ENCODE measurements at regions of chr12 and their contacts with region 1.

Region 1: DNA sequence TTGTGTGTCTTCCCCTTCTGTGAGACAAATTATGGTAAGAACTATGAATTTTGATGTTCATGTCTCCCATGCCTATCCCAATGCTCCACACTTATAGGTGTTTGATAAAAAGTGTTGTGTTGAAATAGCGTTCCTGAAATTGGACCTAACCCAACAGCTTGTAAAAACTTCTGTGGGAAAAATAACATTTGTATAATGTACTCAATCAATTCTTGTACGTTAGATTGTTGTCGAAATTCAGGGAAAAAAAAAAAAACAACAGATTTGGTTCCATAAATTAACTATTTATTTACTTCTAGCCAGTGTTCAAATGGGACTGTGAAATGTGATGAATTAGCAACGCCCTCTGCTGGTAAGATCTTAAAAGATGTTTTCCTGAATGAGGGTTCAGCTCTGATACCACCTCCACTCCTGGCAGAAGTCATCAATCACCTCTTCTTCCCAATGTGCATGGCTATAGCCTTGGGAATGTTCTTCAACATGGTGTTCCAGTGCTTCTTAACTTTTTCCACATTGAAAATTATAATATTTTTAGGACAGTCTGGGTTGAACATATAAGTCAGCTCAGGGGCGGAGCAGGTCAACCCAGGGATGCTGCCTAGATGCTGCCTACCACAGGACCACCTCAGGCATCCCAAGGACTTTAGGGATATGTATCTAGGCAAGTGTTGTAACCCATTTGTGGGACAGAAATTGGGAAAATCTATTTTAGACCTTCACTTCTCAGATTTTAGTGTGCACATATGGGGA is 170.6 kb downstream of the OTOGL start:
- DNase-seq: no peak
- H3K4me3 ChIP-seq: peak overlapping the region in 1 of 2 donors; percentile 27
- H3K27ac ChIP-seq: no peak overlapping the region
- H3K4me1 ChIP-seq: peaks cover 0 to 6% of the 10 kb centered on the region in 2 donors
- H3K27me3 ChIP-seq: no peaks in the 10 kb centered on the region
- CTCF ChIP-seq: peak; percentile 13 to 76 (median 66)

Region 2: GRCh38 chr12:79407671-79408622 is 862.0 kb before region 1 on chr12:
- intact Hi-C with region 1: loop called (anchors 5 kb)
- DNase-seq: peak in 1 of 2 donors; percentile 77
- H3K4me3 ChIP-seq: no peak overlapping the region
- H3K27ac ChIP-seq: peak overlapping the region; percentile 63 to 65
- H3K4me1 ChIP-seq: peaks cover 3 to 17% of the 10 kb centered on the region in 2 donors
- H3K27me3 ChIP-seq: no peaks in the 10 kb centered on the region
- CTCF ChIP-seq: peak; percentile 55 to 76 (median 57)

Region 3: DNA sequence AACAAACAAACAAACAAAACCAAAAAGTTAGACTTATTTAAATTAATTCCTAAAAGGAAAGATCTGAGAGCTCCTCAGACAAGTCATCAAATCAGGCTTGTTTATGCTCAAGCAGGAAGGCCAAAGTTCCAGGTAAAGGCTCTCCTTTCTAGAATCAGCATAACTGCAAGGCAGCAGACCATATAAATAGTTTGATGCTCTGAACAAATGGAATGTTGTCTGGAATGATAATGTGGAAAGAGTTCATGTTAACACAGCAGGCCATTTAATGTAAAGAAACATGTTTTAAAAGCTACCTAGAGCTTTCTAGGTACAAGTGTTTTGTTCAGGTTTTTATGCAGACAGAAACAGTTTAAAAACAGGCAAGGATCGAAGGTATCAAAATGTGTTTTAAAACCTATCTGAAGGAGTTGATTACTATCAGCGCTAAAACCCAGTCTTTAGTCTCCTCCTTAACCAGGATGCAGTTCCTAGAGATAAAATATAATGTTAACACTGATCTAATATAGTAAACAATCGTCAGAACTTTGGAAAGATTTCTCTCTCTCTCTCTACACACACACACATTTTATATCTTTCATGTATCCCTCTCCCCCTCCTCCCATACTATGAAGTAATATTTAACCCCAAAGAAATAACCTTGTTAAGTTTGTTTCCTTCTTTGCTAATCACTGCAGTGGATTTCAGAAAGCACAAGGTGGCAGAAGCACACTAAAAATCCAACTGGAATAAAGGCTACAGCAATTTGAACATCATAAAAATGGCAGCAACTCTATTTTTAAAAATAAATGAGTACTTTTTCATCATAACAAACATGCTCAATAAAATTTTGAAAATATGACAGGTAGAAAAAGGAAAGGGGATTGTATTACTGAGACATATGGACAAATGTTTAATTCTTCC is 714.7 kb before region 1 on chr12:
- intact Hi-C with region 1: loop called (anchors 2 kb)
- DNase-seq: no peak
- H3K4me3 ChIP-seq: no peak overlapping the region
- H3K27ac ChIP-seq: peak overlapping the region; percentile 67 to 76
- H3K4me1 ChIP-seq: peaks cover 3 to 59% of the 10 kb centered on the region in 2 donors
- H3K27me3 ChIP-seq: no peaks in the 10 kb centered on the region
- CTCF ChIP-seq: peak; percentile 38 to 70 (median 61)

Region 4: GRCh38 chr12:80195074-80195726 is 74.8 kb before region 1 on chr12:
- intact Hi-C with region 1: loop called (anchors 1 kb)
- DNase-seq: no peak
- H3K4me3 ChIP-seq: no peak overlapping the region
- H3K27ac ChIP-seq: no peak overlapping the region
- H3K4me1 ChIP-seq: peaks cover 0 to 6% of the 10 kb centered on the region in 2 donors
- H3K27me3 ChIP-seq: no peaks in the 10 kb centered on the region
- CTCF ChIP-seq: peak in 2 of 3 experiments; percentile 41 to 57

Region 5: DNA sequence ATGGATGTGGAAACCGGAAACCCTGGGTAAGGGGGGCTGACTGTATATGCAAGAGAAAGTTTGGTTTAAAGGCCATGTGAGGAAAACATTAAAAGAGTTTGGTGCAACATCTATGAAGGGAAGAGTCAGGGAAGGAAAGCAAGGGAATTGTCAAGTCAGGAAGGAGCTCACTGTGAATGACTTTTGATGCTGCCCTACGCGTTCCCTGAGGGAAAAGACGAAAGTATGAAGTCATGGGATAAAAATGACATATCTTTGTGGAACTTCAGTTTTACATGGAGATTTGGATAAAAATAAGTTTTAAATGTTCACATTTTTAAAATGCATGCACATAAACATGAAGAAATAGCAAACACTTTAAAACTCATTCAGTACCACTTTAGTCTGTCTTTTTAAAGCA is 73.9 kb after region 1 on chr12:
- intact Hi-C with region 1: no loop called
- DNase-seq: no peak
- H3K4me3 ChIP-seq: no peak overlapping the region
- H3K27ac ChIP-seq: no peak overlapping the region
- H3K4me1 ChIP-seq: no peaks in the 10 kb centered on the region
- H3K27me3 ChIP-seq: no peaks in the 10 kb centered on the region
- CTCF ChIP-seq: no peak

Region 6: GRCh38 chr12:80356097-80356496 is 86.1 kb after region 1 on chr12:
- intact Hi-C with region 1: no loop called
- DNase-seq: no peak
- H3K4me3 ChIP-seq: no peak overlapping the region
- H3K27ac ChIP-seq: no peak overlapping the region
- H3K4me1 ChIP-seq: peaks cover 0 to 2% of the 10 kb centered on the region in 2 donors
- H3K27me3 ChIP-seq: no peaks in the 10 kb centered on the region
- CTCF ChIP-seq: no peak